CD4-positive, alpha-beta T cell (primary cell): ENCODE measurements at regions of chr9 and their contacts with region 1.

Region 1: GRCh38 chr9:77384406-77384805 is 207.1 kb downstream of the VPS13A start:
- DNase-seq: no peak
- ATAC-seq: no peak
- H3K4me3 ChIP-seq: no peak overlapping the region
- H3K4me3 Mint-ChIP-seq: no peak overlapping the region
- H3K27ac ChIP-seq: no peak overlapping the region
- H3K27ac Mint-ChIP-seq: no peak overlapping the region
- H3K4me1 ChIP-seq: no peaks in the 10 kb centered on the region
- H3K4me1 Mint-ChIP-seq: no peaks in the 10 kb centered on the region
- H3K27me3 ChIP-seq: no peaks in the 10 kb centered on the region
- H3K27me3 Mint-ChIP-seq: no peaks in the 10 kb centered on the region
- CTCF ChIP-seq: no peak

Region 2: GRCh38 chr9:77328102-77328501 is 56.3 kb before region 1 on chr9:
- CTCF ChIA-PET with region 1: no interaction called
- POLR2A ChIA-PET with region 1: no interaction called
- intact Hi-C with region 1: loop called in 1 of 2 experiments (anchors 10 kb)
- DNase-seq: no peak
- ATAC-seq: no peak
- H3K4me3 ChIP-seq: no peak overlapping the region
- H3K4me3 Mint-ChIP-seq: no peak overlapping the region
- H3K27ac ChIP-seq: no peak overlapping the region
- H3K27ac Mint-ChIP-seq: no peak overlapping the region
- H3K4me1 ChIP-seq: no peaks in the 10 kb centered on the region
- H3K4me1 Mint-ChIP-seq: no peaks in the 10 kb centered on the region
- H3K27me3 ChIP-seq: no peaks in the 10 kb centered on the region
- H3K27me3 Mint-ChIP-seq: no peaks in the 10 kb centered on the region
- CTCF ChIP-seq: no peak